ENCODE measurements at regions of chr10 and their contacts with region 1.

Region 1: GRCh38 chr10:13707156-13707881 is 120.6 kb downstream of the PRPF18 start:
- DNase-seq: peak; percentile 71 to 82
- H3K4me3 ChIP-seq: peak overlapping the region; percentile 47
- H3K4me3 Mint-ChIP-seq: peak overlapping the region; percentile 98
- H3K27ac Mint-ChIP-seq: peak overlapping the region; percentile 95
- H3K4me1 ChIP-seq: peaks cover 66% of the 10 kb centered on the region
- H3K4me1 Mint-ChIP-seq: peaks cover 82% of the 10 kb centered on the region
- H3K27me3 ChIP-seq: no peaks in the 10 kb centered on the region
- H3K27me3 Mint-ChIP-seq: no peaks in the 10 kb centered on the region
- CTCF ChIP-seq: no peak

Region 2: DNA sequence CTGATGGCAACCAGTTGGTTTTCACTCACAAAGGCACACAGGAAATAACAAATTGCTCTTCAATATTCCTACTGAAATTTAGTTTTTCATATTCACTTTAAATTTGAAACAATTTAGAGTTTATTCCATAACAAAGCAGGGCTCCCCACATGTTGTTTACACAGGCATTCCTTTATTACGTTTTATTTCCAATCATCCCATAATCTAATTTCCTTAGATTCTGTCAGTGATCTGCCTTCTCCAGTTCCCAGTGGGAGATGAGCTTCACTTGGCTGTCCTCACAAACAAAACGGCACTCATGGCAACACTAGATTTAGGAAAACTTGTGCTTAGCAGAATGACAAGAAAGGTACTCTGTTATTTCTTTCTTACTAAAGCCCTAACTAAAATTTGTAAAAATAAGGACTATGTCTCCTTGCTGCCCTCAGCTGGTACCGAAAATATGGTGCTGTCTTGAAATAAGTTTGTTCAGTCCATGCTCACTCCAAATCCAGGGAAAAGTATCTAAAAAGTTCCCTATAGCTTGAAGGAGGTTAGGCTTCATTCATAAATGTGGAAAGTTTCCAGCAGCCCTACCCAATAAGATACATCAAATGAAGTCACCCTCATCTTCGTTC is 430.5 kb before region 1 on chr10:
- CTCF ChIA-PET with region 1: no interaction called
- POLR2A ChIA-PET with region 1: no interaction called
- intact Hi-C with region 1: no loop called
- DNase-seq: no peak
- H3K4me3 ChIP-seq: no peak overlapping the region
- H3K4me3 Mint-ChIP-seq: no peak overlapping the region
- H3K27ac Mint-ChIP-seq: no peak overlapping the region
- H3K4me1 ChIP-seq: no peaks in the 10 kb centered on the region
- H3K4me1 Mint-ChIP-seq: no peaks in the 10 kb centered on the region
- H3K27me3 ChIP-seq: no peaks in the 10 kb centered on the region
- H3K27me3 Mint-ChIP-seq: no peaks in the 10 kb centered on the region
- CTCF ChIP-seq: peak in 1 of 2 experiments; percentile 6

Region 3: DNA sequence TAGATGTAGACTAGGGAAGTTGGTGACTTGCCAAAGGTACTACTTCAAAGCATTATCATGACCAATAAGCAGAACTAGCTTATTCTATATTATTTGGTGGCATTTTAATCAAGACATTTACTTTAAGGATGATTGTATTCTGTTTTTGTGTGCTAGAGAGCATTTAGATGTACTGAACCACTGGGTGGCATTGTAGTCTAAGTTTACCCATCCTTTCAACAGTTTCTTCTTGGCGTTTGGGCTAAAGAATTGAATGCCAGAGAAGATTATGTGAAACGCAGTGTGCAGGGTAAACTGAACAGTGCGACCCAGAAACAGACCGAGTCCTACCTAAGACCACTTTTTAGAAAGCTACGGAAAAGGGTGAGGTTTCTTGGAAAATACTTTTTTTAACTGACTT is 93.8 kb before region 1 on chr10:
- CTCF ChIA-PET with region 1: no interaction called
- POLR2A ChIA-PET with region 1: no interaction called
- intact Hi-C with region 1: loop called (anchors 5 kb)
- DNase-seq: peak in 1 of 2 experiments; percentile 49
- H3K4me3 ChIP-seq: no peak overlapping the region
- H3K4me3 Mint-ChIP-seq: no peak overlapping the region
- H3K27ac Mint-ChIP-seq: peak overlapping the region; percentile 42
- H3K4me1 ChIP-seq: peaks cover 28% of the 10 kb centered on the region
- H3K4me1 Mint-ChIP-seq: peaks cover 30% of the 10 kb centered on the region
- H3K27me3 ChIP-seq: no peaks in the 10 kb centered on the region
- H3K27me3 Mint-ChIP-seq: no peaks in the 10 kb centered on the region
- CTCF ChIP-seq: peak; percentile 49 to 58

Region 4: DNA sequence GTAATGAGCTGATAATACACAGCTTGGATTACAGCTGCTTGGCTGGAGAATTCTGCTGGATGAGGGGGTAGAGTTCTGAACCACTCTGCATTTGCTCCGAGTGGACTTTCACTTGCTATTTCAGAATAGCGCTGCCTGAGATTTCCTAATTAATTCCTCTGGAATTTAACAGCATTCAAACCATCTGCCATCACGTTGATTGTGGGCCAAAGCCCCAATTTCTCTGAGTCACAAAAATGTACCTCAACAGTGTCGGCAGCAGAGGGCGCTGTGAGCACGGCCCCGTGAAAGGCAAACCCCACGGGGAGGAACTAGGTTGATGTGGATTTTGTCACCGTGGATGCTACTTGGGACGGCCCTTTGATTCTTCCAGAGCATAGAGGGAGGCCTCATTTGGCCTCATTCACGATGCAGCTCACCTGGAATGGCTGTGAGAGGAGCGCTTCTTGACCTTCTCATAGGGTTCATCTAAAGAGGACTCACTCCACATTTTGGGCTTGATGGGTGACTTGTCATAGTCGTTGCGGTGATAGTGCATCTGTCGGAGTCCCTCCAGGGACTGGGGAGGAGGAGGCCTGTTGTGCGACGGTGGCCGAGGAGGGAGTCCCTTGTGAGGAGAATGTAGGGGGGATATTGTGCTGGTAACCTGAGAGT is 47.3 kb before region 1 on chr10:
- CTCF ChIA-PET with region 1: no interaction called
- POLR2A ChIA-PET with region 1: no interaction called
- intact Hi-C with region 1: loop called (anchors 5 kb)
- DNase-seq: peak; percentile 70 to 78
- H3K4me3 ChIP-seq: no peak overlapping the region
- H3K4me3 Mint-ChIP-seq: no peak overlapping the region
- H3K27ac Mint-ChIP-seq: peak overlapping the region; percentile 14
- H3K4me1 ChIP-seq: no peaks in the 10 kb centered on the region
- H3K4me1 Mint-ChIP-seq: peaks cover 16% of the 10 kb centered on the region
- H3K27me3 ChIP-seq: no peaks in the 10 kb centered on the region
- H3K27me3 Mint-ChIP-seq: no peaks in the 10 kb centered on the region
- CTCF ChIP-seq: peak; percentile 96 to 98

Region 5: GRCh38 chr10:13717931-13718772 is 10.8 kb after region 1 on chr10:
- CTCF ChIA-PET with region 1: interaction called, 23 read pairs
- POLR2A ChIA-PET with region 1: interaction called, 30 read pairs
- intact Hi-C with region 1: loop called (anchors 1 kb)
- DNase-seq: peak; percentile 73 to 74
- H3K4me3 ChIP-seq: peak overlapping the region; percentile 44
- H3K4me3 Mint-ChIP-seq: peak overlapping the region; percentile 98
- H3K27ac Mint-ChIP-seq: peak overlapping the region; percentile 90
- H3K4me1 ChIP-seq: peaks cover 48% of the 10 kb centered on the region
- H3K4me1 Mint-ChIP-seq: peaks cover 42% of the 10 kb centered on the region
- H3K27me3 ChIP-seq: no peaks in the 10 kb centered on the region
- H3K27me3 Mint-ChIP-seq: no peaks in the 10 kb centered on the region
- CTCF ChIP-seq: no peak

Region 6: GRCh38 chr10:13728921-13729535 is 21.7 kb after region 1 on chr10:
- CTCF ChIA-PET with region 1: interaction called, 3 read pairs
- POLR2A ChIA-PET with region 1: interaction called, 4 read pairs
- intact Hi-C with region 1: loop called (anchors 1 kb)
- DNase-seq: peak; percentile 87 to 94
- H3K4me3 ChIP-seq: no peak overlapping the region
- H3K4me3 Mint-ChIP-seq: peak overlapping the region; percentile 61
- H3K27ac Mint-ChIP-seq: peak overlapping the region; percentile 97
- H3K4me1 ChIP-seq: peaks cover 43% of the 10 kb centered on the region
- H3K4me1 Mint-ChIP-seq: peaks cover 57% of the 10 kb centered on the region
- H3K27me3 ChIP-seq: no peaks in the 10 kb centered on the region
- H3K27me3 Mint-ChIP-seq: no peaks in the 10 kb centered on the region
- CTCF ChIP-seq: no peak

Region 7: GRCh38 chr10:13765641-13766341 is 58.5 kb after region 1 on chr10:
- CTCF ChIA-PET with region 1: interaction called, 5 read pairs
- POLR2A ChIA-PET with region 1: interaction called, 17 read pairs
- intact Hi-C with region 1: loop called (anchors 1 kb)
- DNase-seq: peak; percentile 91 to 95
- H3K4me3 ChIP-seq: peak overlapping the region; percentile 4; the same call in 1 of the 2 replicates
- H3K4me3 Mint-ChIP-seq: peak overlapping the region; percentile 63
- H3K27ac Mint-ChIP-seq: peak overlapping the region; percentile 78
- H3K4me1 ChIP-seq: peaks cover 55% of the 10 kb centered on the region
- H3K4me1 Mint-ChIP-seq: peaks cover 64% of the 10 kb centered on the region
- H3K27me3 ChIP-seq: no peaks in the 10 kb centered on the region
- H3K27me3 Mint-ChIP-seq: no peaks in the 10 kb centered on the region
- CTCF ChIP-seq: no peak

Region 8: DNA sequence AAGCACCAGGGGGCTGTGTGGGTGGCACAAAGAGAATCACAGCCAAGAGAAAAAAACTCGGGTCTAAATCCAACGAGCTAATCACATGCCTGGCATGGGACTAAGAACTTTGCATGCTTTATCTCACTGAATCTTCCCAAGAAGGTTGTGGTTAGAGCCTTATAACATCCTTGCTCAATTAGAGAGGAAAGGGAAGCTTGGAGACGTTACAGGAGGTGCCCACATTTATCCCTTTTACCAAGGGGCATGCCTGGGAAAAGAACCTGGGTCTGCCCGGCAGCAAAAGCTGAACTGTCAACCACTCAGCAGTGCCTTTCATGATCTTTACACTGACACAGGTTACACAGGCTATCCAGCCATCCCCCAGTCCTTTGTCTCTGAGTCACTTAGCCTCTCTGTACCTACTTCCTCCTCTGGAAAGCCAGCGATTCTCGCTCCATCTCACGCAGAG is 69.6 kb after region 1 on chr10:
- CTCF ChIA-PET with region 1: interaction called, 7 read pairs
- POLR2A ChIA-PET with region 1: interaction called, 5 read pairs
- intact Hi-C with region 1: loop called (anchors 1 kb)
- DNase-seq: no peak
- H3K4me3 ChIP-seq: no peak overlapping the region
- H3K4me3 Mint-ChIP-seq: no peak overlapping the region
- H3K27ac Mint-ChIP-seq: no peak overlapping the region
- H3K4me1 ChIP-seq: peaks cover 19% of the 10 kb centered on the region
- H3K4me1 Mint-ChIP-seq: peaks cover 13% of the 10 kb centered on the region
- H3K27me3 ChIP-seq: no peaks in the 10 kb centered on the region
- H3K27me3 Mint-ChIP-seq: no peaks in the 10 kb centered on the region
- CTCF ChIP-seq: no peak